ENCODE measurements at regions of chr2 and their contacts with region 1.

Region 1: GRCh38 chr2:27191053-27191829 is 20.6 kb upstream of the ATRAID start:
- DNase-seq: peak; percentile 69
- ATAC-seq: peak; percentile 96
- H3K4me3 Mint-ChIP-seq: no peak overlapping the region
- H3K27ac Mint-ChIP-seq: no peak overlapping the region
- H3K4me1 Mint-ChIP-seq: peaks cover 4% of the 10 kb centered on the region
- H3K27me3 Mint-ChIP-seq: peaks cover 11% of the 10 kb centered on the region

Region 2: GRCh38 chr2:26561918-26562810 is 629.1 kb before region 1 on chr2:
- CTCF ChIA-PET with region 1: no interaction called
- POLR2A ChIA-PET with region 1: no interaction called
- DNase-seq: peak; percentile 66
- ATAC-seq: peak; percentile 91
- H3K4me3 Mint-ChIP-seq: peak overlapping the region; percentile 51
- H3K27ac Mint-ChIP-seq: no peak overlapping the region
- H3K4me1 Mint-ChIP-seq: peaks cover 9% of the 10 kb centered on the region
- H3K27me3 Mint-ChIP-seq: peaks cover 64% of the 10 kb centered on the region

Region 3: DNA sequence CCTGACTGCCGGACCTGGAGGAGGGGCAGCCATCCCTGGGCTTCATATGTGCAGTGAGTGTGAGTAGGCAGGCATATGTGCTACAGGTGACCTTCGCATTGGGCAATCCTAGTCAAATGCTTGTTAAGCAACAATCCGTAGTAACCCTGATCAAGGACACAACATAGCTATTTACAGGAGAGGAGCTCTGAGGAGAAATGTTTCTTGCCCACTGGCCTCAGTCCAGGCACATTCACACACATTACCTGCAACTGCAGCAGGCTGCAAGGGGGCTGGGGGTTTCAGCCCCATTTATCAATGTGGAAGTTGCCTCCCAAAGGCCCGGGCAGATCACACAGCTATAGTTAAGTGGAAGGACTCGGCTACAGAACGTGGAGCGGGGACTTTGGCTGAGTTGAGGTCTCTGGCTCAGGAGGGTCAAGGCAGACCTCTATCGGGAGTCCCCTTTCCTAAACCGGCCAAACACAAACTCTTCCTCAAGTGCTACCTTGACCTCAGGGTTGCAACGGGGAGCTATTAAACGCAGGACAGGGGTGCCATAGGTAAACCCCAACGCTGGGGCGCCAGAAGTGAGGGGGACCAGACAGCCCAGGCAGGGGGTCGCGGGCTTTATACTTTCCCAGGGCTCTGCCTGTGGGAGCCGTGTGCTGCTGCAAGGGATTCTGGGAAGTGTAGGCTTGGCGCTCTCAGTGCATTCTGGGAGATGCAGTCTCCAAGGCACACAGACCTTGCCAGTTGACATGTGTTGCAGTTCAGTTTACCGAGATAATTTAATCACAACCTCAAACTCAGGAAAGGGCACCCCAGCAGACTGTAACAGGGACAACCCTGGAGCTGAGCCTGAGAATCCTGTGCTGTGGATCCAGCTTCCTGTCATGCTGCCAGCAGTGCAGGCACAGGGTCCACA is 95.2 kb before region 1 on chr2:
- CTCF ChIA-PET with region 1: interaction called, 18 read pairs
- POLR2A ChIA-PET with region 1: no interaction called
- DNase-seq: peak; percentile 61
- ATAC-seq: peak; percentile 76
- H3K4me3 Mint-ChIP-seq: peak overlapping the region; percentile 29
- H3K27ac Mint-ChIP-seq: peak overlapping the region; percentile 60
- H3K4me1 Mint-ChIP-seq: peaks cover 14% of the 10 kb centered on the region
- H3K27me3 Mint-ChIP-seq: no peaks in the 10 kb centered on the region

Region 4: GRCh38 chr2:27102329-27102728 is 88.9 kb before region 1 on chr2:
- CTCF ChIA-PET with region 1: interaction called, 18 read pairs
- POLR2A ChIA-PET with region 1: no interaction called
- DNase-seq: no peak
- ATAC-seq: no peak
- H3K4me3 Mint-ChIP-seq: no peak overlapping the region
- H3K27ac Mint-ChIP-seq: no peak overlapping the region
- H3K4me1 Mint-ChIP-seq: no peaks in the 10 kb centered on the region
- H3K27me3 Mint-ChIP-seq: peaks cover 7% of the 10 kb centered on the region

Region 5: DNA sequence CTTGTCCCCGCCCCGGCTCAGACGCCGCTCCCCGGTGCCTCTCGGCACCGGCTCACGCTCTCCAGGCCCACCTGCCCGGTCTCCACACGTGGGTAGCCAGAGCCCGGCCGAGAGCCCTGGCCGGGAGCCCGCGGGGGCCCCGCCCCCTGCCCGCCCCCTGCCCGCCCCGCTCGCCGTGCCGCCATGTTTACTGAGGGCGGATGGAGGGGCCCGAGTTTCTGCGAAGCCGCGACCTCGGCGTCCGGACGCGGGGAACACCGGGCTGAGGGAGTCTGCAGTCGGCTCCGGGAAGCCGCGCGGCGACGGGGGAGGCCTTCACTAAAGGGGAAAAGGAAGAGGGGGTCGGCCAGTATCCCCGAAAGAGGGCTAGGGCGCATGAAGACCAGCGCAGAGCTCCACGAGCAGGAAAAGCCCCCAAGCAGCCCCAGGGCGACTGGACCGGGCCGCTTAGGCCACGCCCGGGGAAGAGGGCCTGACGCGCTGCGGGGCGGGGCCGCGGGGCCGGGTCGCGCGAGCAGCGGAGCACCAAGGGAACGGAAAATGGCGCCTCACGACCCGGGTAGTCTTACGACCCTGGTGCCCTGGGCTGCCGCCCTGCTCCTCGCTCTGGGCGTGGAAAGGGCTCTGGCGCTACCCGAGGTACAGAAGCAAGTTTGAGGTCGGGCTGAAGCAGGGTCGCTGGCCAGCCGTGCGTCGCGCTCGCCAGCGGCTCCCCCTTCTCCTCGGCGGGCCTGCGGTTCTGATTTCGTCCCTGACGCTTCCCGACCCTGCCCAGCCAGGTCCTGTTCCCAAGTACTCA is 20.8 kb after region 1 on chr2 and contains the starts of genes ATRAID and SLC5A6:
- CTCF ChIA-PET with region 1: no interaction called
- POLR2A ChIA-PET with region 1: no interaction called
- DNase-seq: peak; percentile 91
- ATAC-seq: peak; percentile 92
- H3K4me3 Mint-ChIP-seq: peak within 1 kb of the TSS; percentile 98
- H3K27ac Mint-ChIP-seq: peak within 1 kb of the TSS; percentile 99
- H3K4me1 Mint-ChIP-seq: peaks cover 49% of the 10 kb centered on the region
- H3K27me3 Mint-ChIP-seq: no peaks in the 10 kb centered on the region
- total RNA-seq, gene ATRAID: 60.2 to 64.7 TPM
- total RNA-seq, gene SLC5A6: 41.5 to 47.4 TPM

Region 6: GRCh38 chr2:27400348-27401135 is 209.3 kb after region 1 on chr2:
- CTCF ChIA-PET with region 1: no interaction called
- POLR2A ChIA-PET with region 1: no interaction called
- DNase-seq: no peak
- ATAC-seq: no peak
- H3K4me3 Mint-ChIP-seq: no peak overlapping the region
- H3K27ac Mint-ChIP-seq: peak overlapping the region; percentile 25
- H3K4me1 Mint-ChIP-seq: peaks cover 40% of the 10 kb centered on the region
- H3K27me3 Mint-ChIP-seq: no peaks in the 10 kb centered on the region